ENCODE measurements at regions of chr12 and their contacts with region 1.

Region 1: GRCh38 chr12:42482445-42483237 is 106.9 kb downstream of the PRICKLE1 start:
- DNase-seq: peak; percentile 77 to 88 (median 85)
- ATAC-seq: peak; percentile 76 to 91 (median 85)
- H3K4me3 ChIP-seq: peak overlapping the region; percentile 70 to 95 (median 83)
- H3K27ac ChIP-seq: peak overlapping the region; percentile 81 to 99 (median 93)
- H3K4me1 ChIP-seq: peaks cover 0 to 71% (median 35%) of the 10 kb centered on the region in 12 donors
- H3K27me3 ChIP-seq: peaks cover 0 to 30% (median 0%) of the 10 kb centered on the region in 9 donors
- CTCF ChIP-seq: peak; percentile 75 to 99 (median 93)
- POLR2A ChIP-seq: no peak

Region 2: GRCh38 chr12:42426746-42427145 is 55.9 kb before region 1 on chr12:
- intact Hi-C with region 1: no loop called
- DNase-seq: no peak
- ATAC-seq: peak in 2 of 4 donors; percentile 61 to 63
- H3K4me3 ChIP-seq: no peak overlapping the region
- H3K27ac ChIP-seq: peak overlapping the region in 1 of 12 donors; percentile 1
- H3K4me1 ChIP-seq: peaks cover 0 to 18% (median 12%) of the 10 kb centered on the region in 12 donors
- H3K27me3 ChIP-seq: no peaks in the 10 kb centered on the region
- CTCF ChIP-seq: no peak
- POLR2A ChIP-seq: no peak

Region 3: GRCh38 chr12:42552822-42553221 is 70.2 kb after region 1 on chr12:
- intact Hi-C with region 1: loop called in 1 of 10 experiments (anchors 5 kb)
- DNase-seq: no peak
- ATAC-seq: no peak
- H3K4me3 ChIP-seq: no peak overlapping the region
- H3K27ac ChIP-seq: no peak overlapping the region
- H3K4me1 ChIP-seq: peaks cover 0 to 20% (median 1%) of the 10 kb centered on the region in 12 donors
- H3K27me3 ChIP-seq: no peaks in the 10 kb centered on the region
- CTCF ChIP-seq: no peak
- POLR2A ChIP-seq: no peak

Region 4: GRCh38 chr12:42568952-42569915 is 86.6 kb after region 1 on chr12:
- intact Hi-C with region 1: loop called (anchors 1 to 5 kb)
- DNase-seq: no peak
- ATAC-seq: peak in 3 of 4 donors; percentile 40 to 75 (median 66)
- H3K4me3 ChIP-seq: no peak overlapping the region
- H3K27ac ChIP-seq: no peak overlapping the region
- H3K4me1 ChIP-seq: peaks cover 0 to 41% (median 22%) of the 10 kb centered on the region in 12 donors
- H3K27me3 ChIP-seq: no peaks in the 10 kb centered on the region
- CTCF ChIP-seq: peak; percentile 48 to 80 (median 68)
- POLR2A ChIP-seq: no peak

Region 5: GRCh38 chr12:42977451-42978230 is 495.0 kb after region 1 on chr12:
- intact Hi-C with region 1: loop called in 1 of 10 experiments (anchors 10 kb)
- DNase-seq: no peak
- ATAC-seq: no peak
- H3K4me3 ChIP-seq: no peak overlapping the region
- H3K27ac ChIP-seq: peak overlapping the region in 4 of 12 donors; percentile 28 to 82 (median 60)
- H3K4me1 ChIP-seq: peaks cover 0 to 27% (median 0%) of the 10 kb centered on the region in 12 donors
- H3K27me3 ChIP-seq: no peaks in the 10 kb centered on the region
- CTCF ChIP-seq: no peak
- POLR2A ChIP-seq: no peak

Region 6: DNA sequence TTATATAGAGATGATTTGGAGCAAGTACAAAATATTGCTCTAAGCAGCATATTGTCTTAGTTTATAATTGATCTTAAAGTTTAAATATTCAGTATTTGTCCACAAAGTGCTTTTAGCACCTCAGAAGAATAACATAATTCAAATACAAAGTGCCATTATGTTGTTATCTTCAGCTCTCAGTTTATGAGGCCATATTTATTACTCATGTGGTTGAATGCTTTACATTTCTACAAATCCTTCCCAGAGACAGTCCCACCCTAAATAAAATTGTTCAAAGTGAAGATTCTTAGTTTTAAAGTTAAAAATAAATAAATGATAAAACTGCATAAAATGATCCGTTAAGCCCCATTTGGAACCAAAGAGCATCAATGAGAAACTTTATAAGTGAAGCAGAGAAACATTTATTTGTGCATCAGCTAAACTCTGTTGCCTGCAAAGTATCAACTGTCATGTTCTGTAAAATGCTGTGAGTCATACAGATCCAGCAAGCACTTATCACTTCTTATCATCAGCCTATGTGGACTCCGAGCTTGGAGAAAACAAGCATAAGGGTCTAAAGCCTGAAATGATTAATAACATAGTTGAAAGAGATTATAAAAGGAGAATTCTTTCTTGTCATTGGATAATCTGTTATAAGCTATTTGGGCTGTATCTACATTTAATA is 850.5 kb after region 1 on chr12:
- intact Hi-C with region 1: loop called in 8 of 10 experiments (anchors 2 to 10 kb)
- DNase-seq: no peak
- ATAC-seq: no peak
- H3K4me3 ChIP-seq: no peak overlapping the region
- H3K27ac ChIP-seq: no peak overlapping the region
- H3K4me1 ChIP-seq: peaks cover 0 to 6% (median 0%) of the 10 kb centered on the region in 12 donors
- H3K27me3 ChIP-seq: no peaks in the 10 kb centered on the region
- CTCF ChIP-seq: no peak
- POLR2A ChIP-seq: no peak